ENCODE measurements at regions of chr13 and their contacts with region 1.

Region 1: DNA sequence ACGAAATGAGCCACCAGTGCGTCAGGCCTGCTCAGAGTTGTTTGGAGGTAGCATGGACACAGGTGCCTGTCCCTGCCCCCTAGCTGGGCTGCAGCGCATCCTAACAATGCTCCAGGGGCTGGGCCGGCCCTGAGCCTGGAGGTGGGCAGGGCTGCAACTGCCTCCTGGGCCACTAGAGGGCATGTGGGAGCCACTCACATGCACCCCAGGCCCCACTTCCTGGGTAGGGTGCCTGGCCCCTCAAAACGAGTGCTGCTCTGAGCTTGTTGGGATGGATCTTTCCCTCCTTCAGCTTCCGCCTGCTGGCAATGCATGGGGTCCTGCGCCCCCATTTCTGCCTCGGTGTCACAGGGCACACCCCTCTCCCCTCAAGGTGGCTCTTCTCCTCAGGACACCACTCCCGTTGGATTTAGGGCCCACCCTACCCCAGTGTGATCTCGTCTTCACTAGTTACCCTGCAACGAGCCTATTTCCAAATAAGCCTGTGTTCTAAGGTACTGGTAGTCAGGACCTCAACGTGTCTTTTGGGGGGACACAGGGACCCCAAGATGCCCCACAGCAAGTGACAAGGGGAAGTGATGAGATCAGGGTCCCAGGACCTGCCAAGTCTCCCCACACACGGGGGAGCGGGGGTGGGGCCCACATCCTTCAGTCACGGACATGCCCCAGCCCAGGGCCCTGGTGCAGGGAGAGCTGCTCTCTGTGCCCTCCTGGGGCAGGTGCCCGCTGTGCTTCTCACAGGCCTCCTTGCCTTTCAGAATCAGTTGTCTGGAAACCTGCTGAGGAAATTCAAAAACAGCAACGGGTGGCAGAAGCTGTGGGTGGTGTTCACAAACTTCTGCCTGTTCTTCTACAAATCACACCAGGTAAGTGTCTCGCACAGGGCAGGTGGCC is 131.3 kb downstream of the STK24 start:
- DNase-seq: peak; percentile 41
- ATAC-seq: peak; percentile 82
- H3K4me3 ChIP-seq: no peak overlapping the region
- H3K27ac ChIP-seq: no peak overlapping the region
- H3K4me1 ChIP-seq: peaks cover 13% of the 10 kb centered on the region
- H3K27me3 ChIP-seq: no peaks in the 10 kb centered on the region
- CTCF ChIP-seq: peak; percentile 84
- POLR2A ChIP-seq: no peak
- RAD21 ChIP-seq: peak; percentile 86

Region 2: DNA sequence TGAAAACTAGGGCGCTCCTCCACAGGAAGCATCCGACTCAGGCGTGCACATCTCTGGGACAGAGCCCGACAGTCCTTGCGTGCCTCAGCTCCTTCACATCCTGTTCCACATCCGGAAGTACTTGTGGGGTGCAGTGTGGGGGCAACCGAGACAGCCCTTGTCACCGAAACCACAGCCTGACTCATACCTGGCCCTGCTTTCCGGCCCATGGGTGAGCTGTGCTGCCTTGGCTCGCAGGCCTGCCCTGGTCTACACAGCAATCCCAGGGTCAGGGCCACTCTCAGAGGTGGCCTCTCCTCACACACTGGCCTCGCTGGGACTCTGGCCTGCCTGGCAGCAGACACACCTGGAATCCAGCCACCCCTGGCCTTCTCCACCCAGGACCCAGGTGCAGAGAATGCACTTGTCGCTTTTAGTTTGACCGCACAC is 31.0 kb after region 1 on chr13:
- CTCF ChIA-PET with region 1: no interaction called
- POLR2A ChIA-PET with region 1: no interaction called
- dilution Hi-C with region 1: no loop called
- in situ Hi-C with region 1: no loop called
- intact Hi-C with region 1: no loop called
- DNase-seq: peak; percentile 92
- ATAC-seq: peak; percentile 90
- H3K4me3 ChIP-seq: no peak overlapping the region
- H3K27ac ChIP-seq: peak overlapping the region; percentile 68
- H3K4me1 ChIP-seq: peaks cover 19% of the 10 kb centered on the region
- H3K27me3 ChIP-seq: no peaks in the 10 kb centered on the region
- CTCF ChIP-seq: no peak
- POLR2A ChIP-seq: no peak
- RAD21 ChIP-seq: no peak

Region 3: GRCh38 chr13:99033814-99034213 is 588.2 kb after region 1 on chr13:
- CTCF ChIA-PET with region 1: no interaction called
- POLR2A ChIA-PET with region 1: no interaction called
- dilution Hi-C with region 1: no loop called
- in situ Hi-C with region 1: loop called (anchors 25 kb)
- intact Hi-C with region 1: no loop called
- DNase-seq: peak; percentile 28
- ATAC-seq: peak; percentile 80
- H3K4me3 ChIP-seq: no peak overlapping the region
- H3K27ac ChIP-seq: no peak overlapping the region
- H3K4me1 ChIP-seq: no peaks in the 10 kb centered on the region
- H3K27me3 ChIP-seq: no peaks in the 10 kb centered on the region
- CTCF ChIP-seq: peak; percentile 65
- POLR2A ChIP-seq: no peak
- RAD21 ChIP-seq: peak; percentile 59

Measured in IMR-90 (cell line).